ENCODE measurements at regions of chr10 and their contacts with region 1.

Region 1: GRCh38 chr10:97400665-97401454 is at the start of gene RRP12:
- DNase-seq: peak; percentile 89
- ATAC-seq: peak; percentile 99
- H3K4me3 Mint-ChIP-seq: peak within 1 kb of the TSS; percentile 96
- H3K27ac Mint-ChIP-seq: peak within 1 kb of the TSS; percentile 85
- H3K4me1 Mint-ChIP-seq: peaks cover 7% of the 10 kb centered on the region
- H3K27me3 Mint-ChIP-seq: no peaks in the 10 kb centered on the region
- total RNA-seq, gene RRP12: 45.9 to 49.4 TPM

Region 2: GRCh38 chr10:97318772-97319651 is 81.8 kb before region 1 on chr10 and contains the start of gene FRAT1:
- CTCF ChIA-PET with region 1: interaction called, 6 read pairs
- POLR2A ChIA-PET with region 1: no interaction called
- intact Hi-C with region 1: loop called in 1 of 2 experiments (anchors 1 kb)
- DNase-seq: peak; percentile 92
- ATAC-seq: peak; percentile 64
- H3K4me3 Mint-ChIP-seq: peak within 1 kb of the TSS; percentile 91
- H3K27ac Mint-ChIP-seq: peak within 1 kb of the TSS; percentile 99
- H3K4me1 Mint-ChIP-seq: peaks cover 29% of the 10 kb centered on the region
- H3K27me3 Mint-ChIP-seq: no peaks in the 10 kb centered on the region
- total RNA-seq, gene FRAT1: 1.3 to 1.8 TPM

Region 3: DNA sequence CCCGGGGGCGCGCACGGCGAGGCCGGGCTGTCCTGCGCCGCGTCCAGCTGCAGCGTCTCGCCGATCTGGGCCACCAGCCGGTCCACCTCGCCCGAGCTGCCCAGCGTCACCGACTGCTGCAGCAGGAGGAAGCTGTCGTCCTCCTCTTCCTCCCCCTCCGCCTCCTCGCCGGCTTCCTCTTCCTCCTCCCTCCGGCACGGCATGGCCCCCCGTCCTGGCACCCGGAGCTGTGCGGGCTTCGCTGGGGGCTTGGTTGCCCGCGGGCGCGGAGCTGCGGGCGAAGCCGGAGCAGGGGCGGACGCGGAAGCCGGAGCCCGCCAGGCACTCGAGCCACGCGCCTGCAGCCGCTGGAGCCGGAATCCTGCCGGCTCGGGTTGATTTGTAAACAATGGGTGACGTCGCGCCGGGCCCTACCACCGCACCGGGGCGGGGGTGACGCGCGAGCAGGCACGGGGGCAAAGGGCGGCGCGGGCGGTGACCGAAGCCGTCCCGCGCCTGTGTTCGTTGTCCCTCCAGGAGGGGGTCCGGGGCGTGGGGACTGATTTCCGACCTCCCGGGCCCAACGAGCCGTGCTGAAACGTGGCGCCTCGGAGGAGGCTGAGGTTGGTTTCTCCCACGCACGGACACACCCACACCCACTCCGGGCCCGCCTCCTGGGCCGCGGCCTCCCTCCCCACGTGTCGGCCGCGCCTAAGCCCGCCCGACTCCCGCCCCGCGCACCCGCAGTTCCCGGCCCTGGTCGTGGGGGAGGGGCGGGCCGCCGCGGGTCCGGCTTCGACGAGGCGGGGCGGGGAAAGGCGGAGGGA is 66.3 kb before region 1 on chr10 and contains the start of gene FRAT2:
- CTCF ChIA-PET with region 1: no interaction called
- POLR2A ChIA-PET with region 1: interaction called, 4 read pairs
- intact Hi-C with region 1: loop called (anchors 1 kb)
- DNase-seq: peak; percentile 91
- ATAC-seq: peak; percentile 85
- H3K4me3 Mint-ChIP-seq: peak within 1 kb of the TSS; percentile 83
- H3K27ac Mint-ChIP-seq: peak within 1 kb of the TSS; percentile 86
- H3K4me1 Mint-ChIP-seq: peaks cover 40% of the 10 kb centered on the region
- H3K27me3 Mint-ChIP-seq: no peaks in the 10 kb centered on the region
- total RNA-seq, gene FRAT2: 3.0 to 4.3 TPM

Region 4: DNA sequence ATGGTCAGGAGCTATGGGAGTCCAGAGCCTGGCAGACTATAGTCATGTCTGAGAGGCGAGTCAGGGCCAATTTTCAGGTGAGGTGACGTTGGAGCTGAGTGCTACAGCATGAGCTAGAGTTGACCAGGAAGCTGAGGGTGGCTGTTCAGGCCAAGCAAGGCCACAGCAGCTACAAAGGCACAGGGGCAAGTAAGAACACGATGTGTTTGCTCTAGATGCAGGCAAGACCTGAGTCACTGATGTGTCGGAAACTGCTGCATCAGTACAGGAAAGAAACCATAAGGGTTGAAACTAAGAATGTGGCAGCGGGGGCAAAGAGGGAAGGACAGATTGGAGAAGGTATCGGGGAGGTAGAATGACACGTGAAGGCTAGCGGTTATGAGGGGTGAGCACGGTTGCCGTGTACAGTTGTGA is 12.0 kb after region 1 on chr10:
- CTCF ChIA-PET with region 1: interaction called, 60 read pairs
- POLR2A ChIA-PET with region 1: interaction called, 28 read pairs
- intact Hi-C with region 1: loop called in 1 of 2 experiments (anchors 1 kb)
- DNase-seq: peak; percentile 85
- ATAC-seq: peak; percentile 72
- H3K4me3 Mint-ChIP-seq: peak overlapping the region; percentile 37
- H3K27ac Mint-ChIP-seq: peak overlapping the region; percentile 87
- H3K4me1 Mint-ChIP-seq: peaks cover 52% of the 10 kb centered on the region
- H3K27me3 Mint-ChIP-seq: no peaks in the 10 kb centered on the region

Region 5: DNA sequence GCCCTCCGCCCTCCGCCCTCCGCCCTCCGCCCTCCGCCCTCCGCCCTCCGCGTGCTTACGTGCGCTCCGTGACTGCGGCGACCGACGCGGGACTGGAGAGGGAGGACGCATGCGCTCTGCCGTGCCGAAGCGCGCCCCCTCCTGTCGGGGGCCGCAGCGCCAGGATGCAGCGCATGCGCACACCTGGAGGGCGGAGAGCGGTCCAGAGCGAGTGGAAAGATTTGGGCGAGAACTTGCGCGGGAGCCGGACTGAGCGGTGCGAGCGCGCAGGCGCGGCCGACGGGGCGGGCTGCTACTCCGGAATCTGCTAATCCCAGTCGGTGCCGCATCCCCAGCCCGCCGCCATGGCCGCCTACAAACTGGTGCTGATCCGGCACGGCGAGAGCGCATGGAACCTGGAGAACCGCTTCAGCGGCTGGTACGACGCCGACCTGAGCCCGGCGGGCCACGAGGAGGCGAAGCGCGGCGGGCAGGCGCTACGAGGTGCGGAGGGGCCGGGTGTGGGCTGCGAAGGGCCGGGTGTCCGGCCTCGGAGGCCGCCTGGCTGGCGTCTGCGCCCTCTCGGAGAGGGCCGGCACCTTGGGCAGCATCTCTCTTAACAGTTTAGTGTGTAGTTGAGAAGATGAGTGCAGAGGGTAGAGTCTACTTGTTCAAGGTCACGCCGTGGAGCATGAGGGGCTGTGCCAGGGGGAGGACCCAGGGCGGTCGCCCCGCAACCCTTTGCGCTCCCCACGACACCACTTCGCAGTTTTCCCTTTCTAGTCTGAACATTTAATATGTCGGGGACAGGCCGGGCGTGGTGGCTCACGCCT is 25.3 kb after region 1 on chr10 and contains the start of gene PGAM1:
- CTCF ChIA-PET with region 1: interaction called, 27 read pairs
- POLR2A ChIA-PET with region 1: interaction called, 17 read pairs
- intact Hi-C with region 1: loop called in 1 of 2 experiments (anchors 1 kb)
- DNase-seq: peak; percentile 97
- ATAC-seq: peak; percentile 71
- H3K4me3 Mint-ChIP-seq: peak within 1 kb of the TSS; percentile 96
- H3K27ac Mint-ChIP-seq: peak within 1 kb of the TSS; percentile 98
- H3K4me1 Mint-ChIP-seq: peaks cover 52% of the 10 kb centered on the region
- H3K27me3 Mint-ChIP-seq: no peaks in the 10 kb centered on the region
- total RNA-seq, gene PGAM1: 1,151 to 1,499 TPM

Region 6: DNA sequence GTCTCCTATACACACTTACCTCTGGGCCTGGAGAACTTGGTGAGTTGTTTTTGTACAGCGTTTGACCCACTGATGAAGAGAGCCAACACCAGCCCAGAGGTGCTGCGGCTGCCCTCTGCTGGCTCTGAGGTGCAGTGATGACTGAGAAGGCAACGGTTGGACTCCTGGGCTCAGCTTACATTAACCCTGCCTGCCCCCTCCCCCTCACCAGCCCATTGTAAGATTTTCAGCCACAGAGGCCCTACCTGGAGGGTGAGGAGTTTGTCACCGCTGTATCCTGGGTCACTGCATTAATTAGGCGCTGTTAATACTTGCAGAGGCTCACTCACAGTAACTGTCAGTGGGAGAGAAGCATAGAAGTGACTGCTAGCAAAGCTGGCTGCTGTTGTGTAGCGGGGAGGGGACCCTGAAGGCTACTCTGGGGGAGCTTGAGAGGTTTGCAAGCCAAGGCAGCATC is 152.7 kb after region 1 on chr10:
- CTCF ChIA-PET with region 1: interaction called, 11 read pairs
- POLR2A ChIA-PET with region 1: interaction called, 3 read pairs
- intact Hi-C with region 1: no loop called
- DNase-seq: peak; percentile 81
- ATAC-seq: peak; percentile 99
- H3K4me3 Mint-ChIP-seq: no peak overlapping the region
- H3K27ac Mint-ChIP-seq: no peak overlapping the region
- H3K4me1 Mint-ChIP-seq: no peaks in the 10 kb centered on the region
- H3K27me3 Mint-ChIP-seq: no peaks in the 10 kb centered on the region

Region 7: DNA sequence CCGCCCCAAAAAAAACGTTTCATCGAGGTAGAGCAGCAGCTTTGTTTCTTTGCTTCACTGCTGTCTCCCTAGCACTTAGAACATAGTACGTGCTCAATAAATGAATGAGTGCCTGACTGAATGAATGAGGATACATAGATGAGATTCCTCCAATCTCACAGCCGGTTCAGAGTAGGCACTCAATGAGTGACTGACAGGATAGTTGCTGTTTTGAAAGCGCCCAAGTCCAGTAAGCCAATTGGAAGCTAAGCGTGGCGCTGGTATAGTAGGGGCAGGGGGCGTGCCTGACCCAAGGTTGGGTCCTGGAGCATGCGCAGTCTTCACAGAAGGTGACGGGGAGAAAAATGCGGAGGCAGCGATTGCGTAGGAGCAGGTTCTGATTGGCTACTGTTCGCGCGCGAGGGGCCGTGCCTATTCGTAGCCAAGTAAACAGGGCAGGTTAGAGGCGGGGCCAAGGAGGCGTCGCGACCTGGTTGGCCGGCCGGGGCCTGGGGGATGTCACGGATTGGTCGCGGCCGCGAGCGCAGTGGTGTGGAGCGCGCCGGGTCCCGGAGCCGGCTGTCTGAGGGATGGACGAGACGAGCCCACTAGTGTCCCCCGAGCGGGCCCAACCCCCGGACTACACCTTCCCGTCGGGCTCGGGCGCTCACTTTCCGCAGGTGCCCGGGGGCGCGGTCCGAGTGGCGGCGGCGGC is 239.5 kb after region 1 on chr10 and contains the start of gene PI4K2A:
- CTCF ChIA-PET with region 1: no interaction called
- POLR2A ChIA-PET with region 1: no interaction called
- intact Hi-C with region 1: loop called in 1 of 2 experiments (anchors 1 kb)
- DNase-seq: peak; percentile 100
- ATAC-seq: peak; percentile 99
- H3K4me3 Mint-ChIP-seq: peak within 1 kb of the TSS; percentile 97
- H3K27ac Mint-ChIP-seq: peak within 1 kb of the TSS; percentile 93
- H3K4me1 Mint-ChIP-seq: peaks cover 18% of the 10 kb centered on the region
- H3K27me3 Mint-ChIP-seq: no peaks in the 10 kb centered on the region
- total RNA-seq, gene PI4K2A: 8.5 to 8.9 TPM

Region 8: GRCh38 chr10:97676770-97677581 is 276.1 kb after region 1 on chr10:
- CTCF ChIA-PET with region 1: no interaction called
- POLR2A ChIA-PET with region 1: no interaction called
- intact Hi-C with region 1: no loop called
- DNase-seq: peak; percentile 64
- ATAC-seq: peak; percentile 84
- H3K4me3 Mint-ChIP-seq: no peak overlapping the region
- H3K27ac Mint-ChIP-seq: no peak overlapping the region
- H3K4me1 Mint-ChIP-seq: peaks cover 5% of the 10 kb centered on the region
- H3K27me3 Mint-ChIP-seq: no peaks in the 10 kb centered on the region

Region 9: GRCh38 chr10:97999066-97999922 is 598.4 kb after region 1 on chr10:
- CTCF ChIA-PET with region 1: no interaction called
- POLR2A ChIA-PET with region 1: no interaction called
- intact Hi-C with region 1: no loop called
- DNase-seq: no peak
- ATAC-seq: no peak
- H3K4me3 Mint-ChIP-seq: no peak overlapping the region
- H3K27ac Mint-ChIP-seq: no peak overlapping the region
- H3K4me1 Mint-ChIP-seq: no peaks in the 10 kb centered on the region
- H3K27me3 Mint-ChIP-seq: peaks cover 4% of the 10 kb centered on the region

Region 10: GRCh38 chr10:98030031-98030821 is 629.4 kb after region 1 on chr10 and contains the start of gene CRTAC1:
- CTCF ChIA-PET with region 1: no interaction called
- POLR2A ChIA-PET with region 1: no interaction called
- intact Hi-C with region 1: no loop called
- DNase-seq: peak; percentile 28
- ATAC-seq: no peak
- H3K4me3 Mint-ChIP-seq: no peak within 1 kb of the TSS
- H3K27ac Mint-ChIP-seq: no peak within 1 kb of the TSS
- H3K4me1 Mint-ChIP-seq: peaks cover 3% of the 10 kb centered on the region
- H3K27me3 Mint-ChIP-seq: peaks cover 53% of the 10 kb centered on the region
- total RNA-seq, gene CRTAC1: not detected

Region 11: DNA sequence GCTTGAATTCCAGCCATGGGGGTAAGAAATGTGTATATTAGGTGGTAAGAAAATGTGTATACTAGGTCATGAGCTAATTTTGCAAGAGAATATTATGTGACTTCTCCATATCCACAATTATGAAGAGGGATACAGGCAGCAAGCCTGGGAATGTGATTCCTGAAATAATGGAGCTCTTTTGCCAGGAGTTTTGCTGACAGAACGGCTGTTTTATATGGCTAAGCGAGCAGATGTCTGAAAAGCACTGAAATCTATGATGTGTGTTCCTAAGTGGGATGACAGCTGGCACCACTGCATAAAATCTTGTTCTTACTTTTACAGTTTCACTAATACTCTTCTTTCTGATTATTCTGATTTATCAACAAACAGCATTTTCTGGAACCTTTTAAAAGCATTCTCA is 1431.9 kb after region 1 on chr10:
- CTCF ChIA-PET with region 1: no interaction called
- POLR2A ChIA-PET with region 1: no interaction called
- intact Hi-C with region 1: no loop called
- DNase-seq: no peak
- ATAC-seq: no peak
- H3K4me3 Mint-ChIP-seq: no peak overlapping the region
- H3K27ac Mint-ChIP-seq: no peak overlapping the region
- H3K4me1 Mint-ChIP-seq: no peaks in the 10 kb centered on the region
- H3K27me3 Mint-ChIP-seq: no peaks in the 10 kb centered on the region

Measured in activated CD4-positive, alpha-beta T cell treated with anti-CD3 and anti-CD28 coated beads for 36 hours (primary cell).